ENCODE measurements at regions of chr17 and their contacts with region 1.

Region 1: DNA sequence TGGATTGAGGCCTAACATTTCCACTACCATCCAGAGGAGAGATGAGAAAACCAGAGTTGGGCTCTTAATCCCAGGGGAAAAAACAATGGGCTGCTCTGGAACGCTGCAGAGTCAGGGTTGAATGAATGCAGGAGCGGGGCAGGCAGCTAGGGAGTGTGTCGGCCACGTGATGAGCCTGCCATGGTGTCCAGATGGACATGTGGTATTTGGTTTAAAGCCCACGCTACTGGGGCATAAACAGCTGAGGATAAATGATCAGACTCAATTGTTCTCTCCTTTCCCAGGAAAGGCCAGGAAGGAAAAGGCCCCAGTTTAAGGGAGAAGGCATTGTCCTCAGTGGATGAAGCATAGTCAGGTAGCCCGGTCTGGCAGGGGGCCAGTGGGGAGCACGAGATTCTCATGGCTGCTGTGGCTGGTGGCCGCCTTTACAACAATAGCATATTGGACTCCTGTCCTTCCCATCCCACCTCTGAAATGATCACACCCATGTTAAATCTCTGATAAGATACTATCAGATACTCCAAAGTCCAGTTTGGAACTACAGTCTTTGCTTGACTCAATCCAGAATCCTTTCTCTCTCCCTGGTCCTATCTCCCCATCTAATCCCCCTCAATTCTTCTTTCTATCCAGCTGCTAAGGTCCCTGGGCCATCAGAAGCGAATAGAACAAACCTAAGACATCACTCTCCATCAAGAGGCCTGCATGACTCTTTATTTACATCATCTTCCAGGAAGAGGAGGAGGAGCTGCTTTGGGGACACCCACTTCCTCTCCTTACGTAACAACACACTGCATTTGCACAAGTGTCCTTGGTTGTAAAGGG is 20.4 kb downstream of the CA4 start:
- DNase-seq: peak in 4 of 9 donors; percentile 34 to 42 (median 36)
- ATAC-seq: peak; percentile 77
- H3K4me3 ChIP-seq: no peak overlapping the region
- H3K4me3 Mint-ChIP-seq: peak overlapping the region in 4 of 10 donors; percentile 8 to 48 (median 29)
- H3K27ac ChIP-seq: no peak overlapping the region
- H3K27ac Mint-ChIP-seq: peak overlapping the region; percentile 9 to 90 (median 66)
- H3K4me1 ChIP-seq: peaks cover 5 to 13% of the 10 kb centered on the region in 2 donors
- H3K4me1 Mint-ChIP-seq: peaks cover 7 to 32% (median 13%) of the 10 kb centered on the region in 7 donors
- H3K27me3 ChIP-seq: no peaks in the 10 kb centered on the region
- H3K27me3 Mint-ChIP-seq: no peaks in the 10 kb centered on the region

Region 2: DNA sequence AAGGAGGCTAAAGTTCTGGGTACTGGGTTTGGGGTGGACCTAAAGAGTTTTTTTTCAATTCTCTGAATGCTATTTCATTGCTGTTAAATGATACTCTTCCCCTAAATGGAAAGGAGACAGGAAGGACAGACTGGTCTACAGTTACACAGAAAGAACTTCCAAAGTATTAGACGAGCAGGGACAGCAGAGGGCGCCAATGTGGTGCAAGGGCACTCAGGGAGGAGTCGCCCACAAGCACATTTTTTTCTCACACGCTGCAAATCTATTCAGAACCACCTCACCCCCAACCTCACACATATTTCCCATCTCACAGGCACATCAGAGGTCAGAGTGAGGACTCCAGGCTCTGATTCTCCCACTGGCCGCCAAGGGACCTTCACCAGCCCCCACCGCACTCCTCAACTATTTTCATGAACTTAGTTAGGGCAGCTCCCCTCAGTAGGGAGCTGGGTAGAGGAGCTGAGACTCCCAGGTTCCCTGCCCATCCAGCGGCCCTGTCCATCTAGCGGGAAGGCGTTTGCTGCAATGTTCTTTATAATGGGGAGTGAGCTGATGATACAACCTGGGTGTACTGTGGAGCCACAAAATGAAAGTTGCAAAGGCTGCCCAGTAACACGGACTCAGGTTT is 27.1 kb before region 1 on chr17:
- CTCF ChIA-PET with region 1: no interaction called
- POLR2A ChIA-PET with region 1: no interaction called
- intact Hi-C with region 1: loop called in 1 of 2 experiments (anchors 2 kb)
- DNase-seq: peak; percentile 31 to 74 (median 62)
- ATAC-seq: peak; percentile 81
- H3K4me3 ChIP-seq: no peak overlapping the region
- H3K4me3 Mint-ChIP-seq: peak overlapping the region in 4 of 10 donors; percentile 25 to 49 (median 34)
- H3K27ac ChIP-seq: no peak overlapping the region
- H3K27ac Mint-ChIP-seq: no peak overlapping the region
- H3K4me1 ChIP-seq: peaks cover 0 to 5% of the 10 kb centered on the region in 2 donors
- H3K4me1 Mint-ChIP-seq: peaks cover 0 to 33% (median 23%) of the 10 kb centered on the region in 7 donors
- H3K27me3 ChIP-seq: peaks cover 8 to 23% of the 10 kb centered on the region in 2 donors
- H3K27me3 Mint-ChIP-seq: peaks cover 75 to 96% (median 80%) of the 10 kb centered on the region in 5 donors

Measured in naive thymus-derived CD4-positive, alpha-beta T cell (primary cell).